Naive thymus-derived CD4-positive, alpha-beta T cell (primary cell): ENCODE measurements at regions of chr14 and their contacts with region 1.

Region 1: DNA sequence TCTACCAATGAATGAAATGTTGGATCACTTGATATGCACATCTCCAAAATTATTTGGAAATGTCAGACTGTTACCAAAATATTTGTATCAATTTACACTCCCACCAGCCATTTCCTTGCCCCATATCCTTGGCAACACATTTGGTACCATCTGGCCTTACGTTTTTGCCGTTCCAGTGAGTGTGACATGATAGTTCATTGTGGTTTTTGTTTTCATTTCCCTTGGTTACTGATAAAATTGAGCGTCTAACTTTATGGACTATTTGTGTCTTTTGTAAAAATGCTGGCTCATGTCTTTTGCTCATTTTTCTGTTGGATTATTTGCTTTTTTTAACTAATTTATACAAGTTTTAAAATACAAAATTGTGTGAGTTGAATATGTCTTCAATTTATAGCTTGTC is 11.0 kb downstream of the KLHDC1 start:
- DNase-seq: no peak
- ATAC-seq: no peak
- H3K4me3 ChIP-seq: no peak overlapping the region
- H3K4me3 Mint-ChIP-seq: no peak overlapping the region
- H3K27ac ChIP-seq: no peak overlapping the region
- H3K27ac Mint-ChIP-seq: peak overlapping the region in 1 of 9 donors; percentile 72
- H3K4me1 ChIP-seq: no peaks in the 10 kb centered on the region
- H3K4me1 Mint-ChIP-seq: peaks cover 6 to 25% (median 16%) of the 10 kb centered on the region in 7 donors
- H3K27me3 ChIP-seq: no peaks in the 10 kb centered on the region
- H3K27me3 Mint-ChIP-seq: no peaks in the 10 kb centered on the region

Region 2: DNA sequence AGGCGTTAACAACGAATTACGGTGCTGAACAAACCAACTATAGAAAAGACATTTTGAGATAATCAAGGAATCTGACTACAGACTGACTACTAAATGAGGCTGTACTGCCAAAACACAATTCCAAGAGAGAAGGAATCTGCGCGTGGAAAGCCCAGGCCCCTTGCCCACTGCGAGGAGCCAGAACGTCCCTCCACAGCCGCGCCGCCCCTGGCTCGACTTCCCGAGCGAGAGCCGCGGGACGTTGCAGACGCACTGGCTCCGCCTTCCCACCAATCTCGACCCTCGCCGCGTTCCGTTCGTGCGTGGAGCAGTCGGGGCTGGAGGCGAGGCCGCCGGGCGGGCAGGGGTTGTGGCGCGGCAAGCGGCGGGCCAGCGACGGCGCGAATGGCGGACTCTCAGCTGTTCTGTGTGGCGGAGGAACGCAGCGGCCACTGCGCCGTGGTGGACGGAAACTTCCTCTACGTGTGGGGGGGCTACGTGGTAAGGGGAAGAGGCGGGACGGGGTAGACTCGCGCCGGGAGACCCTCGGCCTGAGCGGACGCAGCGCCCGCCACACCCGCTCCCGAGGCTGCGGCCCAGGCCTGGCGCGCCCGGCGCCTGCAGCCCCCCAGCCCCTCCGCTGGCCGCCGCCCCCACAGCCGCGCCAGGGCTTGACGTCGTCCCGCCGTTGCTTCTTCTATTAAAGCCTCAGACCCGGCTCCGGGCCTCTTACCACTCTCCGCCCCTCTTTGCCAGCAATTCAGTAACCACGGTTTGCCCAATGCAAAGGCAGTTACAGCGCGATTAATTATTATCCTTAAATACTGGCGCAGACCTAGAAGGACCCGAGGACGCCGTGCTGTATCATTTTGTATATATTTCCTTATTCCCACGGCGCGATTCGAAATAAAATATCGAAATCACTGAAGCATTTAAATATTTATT is 10.9 kb before region 1 on chr14 and contains the start of gene KLHDC1:
- CTCF ChIA-PET with region 1: no interaction called
- POLR2A ChIA-PET with region 1: interaction called, 3 read pairs
- intact Hi-C with region 1: loop called in 1 of 2 experiments (anchors 2 kb)
- DNase-seq: peak; percentile 70 to 84 (median 80)
- ATAC-seq: peak; percentile 89
- H3K4me3 ChIP-seq: peak within 1 kb of the TSS; percentile 67
- H3K4me3 Mint-ChIP-seq: peak within 1 kb of the TSS; percentile 81 to 100 (median 89)
- H3K27ac ChIP-seq: peak within 1 kb of the TSS; percentile 80
- H3K27ac Mint-ChIP-seq: peak within 1 kb of the TSS; percentile 79 to 99 (median 94)
- H3K4me1 ChIP-seq: peaks cover 8 to 19% of the 10 kb centered on the region in 2 donors
- H3K4me1 Mint-ChIP-seq: peaks cover 20 to 52% (median 43%) of the 10 kb centered on the region in 7 donors
- H3K27me3 ChIP-seq: no peaks in the 10 kb centered on the region
- H3K27me3 Mint-ChIP-seq: no peaks in the 10 kb centered on the region
- total RNA-seq, gene KLHDC1: 2.6 to 18.0 (median 12.2) TPM